ENCODE measurements at regions of chr1 and their contacts with region 1.

Region 1: DNA sequence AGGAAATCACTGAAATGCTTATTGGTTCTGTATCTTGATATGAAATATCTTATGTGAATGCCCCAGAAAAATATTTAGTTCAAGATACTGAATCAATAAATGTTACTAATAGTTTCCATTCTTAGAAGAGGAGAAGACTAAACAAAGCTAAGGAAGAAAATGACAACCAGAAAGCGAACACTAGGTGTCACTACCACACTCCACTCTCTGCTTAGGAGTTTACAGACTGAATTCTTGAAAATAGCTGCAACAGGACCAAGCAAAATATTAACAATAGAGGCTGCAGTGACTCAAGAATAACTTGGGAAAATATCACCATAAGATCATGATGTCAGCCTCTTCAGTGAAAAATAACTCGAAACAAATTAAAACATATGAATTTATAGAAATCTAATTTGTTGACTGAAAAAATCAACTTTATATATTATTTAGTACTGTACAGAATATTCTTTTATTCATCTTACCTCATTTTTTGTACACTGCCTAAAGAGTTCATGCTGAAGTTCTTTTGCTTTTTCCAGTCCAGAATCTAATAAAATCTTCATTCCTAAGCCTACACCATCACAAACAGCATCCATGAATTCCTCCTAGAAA is 61.6 kb downstream of the KIF14 start:
- DNase-seq: peak; percentile 44
- H3K4me3 ChIP-seq: no peak overlapping the region
- H3K27ac ChIP-seq: no peak overlapping the region
- H3K4me1 ChIP-seq: no peaks in the 10 kb centered on the region
- CTCF ChIP-seq: peak; percentile 92

Region 2: GRCh38 chr1:200837931-200838571 is 279.1 kb after region 1 on chr1:
- CTCF ChIA-PET with region 1: no interaction called
- POLR2A ChIA-PET with region 1: no interaction called
- intact Hi-C with region 1: loop called (anchors 2 kb)
- DNase-seq: peak; percentile 21
- H3K4me3 ChIP-seq: no peak overlapping the region
- H3K27ac ChIP-seq: no peak overlapping the region
- H3K4me1 ChIP-seq: no peaks in the 10 kb centered on the region
- CTCF ChIP-seq: peak; percentile 88